IMR-90 (cell line): ENCODE measurements at regions of chr12 and their contacts with region 1.

Region 1: DNA sequence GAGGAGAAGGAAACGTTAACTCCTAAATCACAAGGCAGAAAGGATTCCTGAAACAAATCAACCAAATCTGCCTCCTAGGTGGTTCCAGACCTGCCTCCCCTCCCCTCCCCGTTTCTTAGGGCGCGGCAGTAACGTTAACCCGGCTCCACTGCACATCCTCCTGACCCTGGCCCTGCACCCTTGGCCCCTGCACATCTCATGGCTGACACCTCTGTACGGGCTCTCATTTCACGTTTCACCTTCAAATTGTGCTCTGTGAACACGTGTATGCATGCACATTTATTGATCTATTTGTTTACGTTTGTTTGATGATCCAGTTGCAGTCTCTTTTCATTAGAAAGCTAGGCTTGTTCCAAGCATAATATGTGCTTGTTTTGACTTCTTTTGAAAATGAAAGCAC is 358.1 kb downstream of the ADGRD1 start:
- DNase-seq: no peak
- ATAC-seq: no peak
- H3K4me3 ChIP-seq: no peak overlapping the region
- H3K27ac ChIP-seq: no peak overlapping the region
- H3K4me1 ChIP-seq: no peaks in the 10 kb centered on the region
- H3K27me3 ChIP-seq: no peaks in the 10 kb centered on the region
- CTCF ChIP-seq: no peak
- POLR2A ChIP-seq: no peak
- RAD21 ChIP-seq: no peak

Region 2: DNA sequence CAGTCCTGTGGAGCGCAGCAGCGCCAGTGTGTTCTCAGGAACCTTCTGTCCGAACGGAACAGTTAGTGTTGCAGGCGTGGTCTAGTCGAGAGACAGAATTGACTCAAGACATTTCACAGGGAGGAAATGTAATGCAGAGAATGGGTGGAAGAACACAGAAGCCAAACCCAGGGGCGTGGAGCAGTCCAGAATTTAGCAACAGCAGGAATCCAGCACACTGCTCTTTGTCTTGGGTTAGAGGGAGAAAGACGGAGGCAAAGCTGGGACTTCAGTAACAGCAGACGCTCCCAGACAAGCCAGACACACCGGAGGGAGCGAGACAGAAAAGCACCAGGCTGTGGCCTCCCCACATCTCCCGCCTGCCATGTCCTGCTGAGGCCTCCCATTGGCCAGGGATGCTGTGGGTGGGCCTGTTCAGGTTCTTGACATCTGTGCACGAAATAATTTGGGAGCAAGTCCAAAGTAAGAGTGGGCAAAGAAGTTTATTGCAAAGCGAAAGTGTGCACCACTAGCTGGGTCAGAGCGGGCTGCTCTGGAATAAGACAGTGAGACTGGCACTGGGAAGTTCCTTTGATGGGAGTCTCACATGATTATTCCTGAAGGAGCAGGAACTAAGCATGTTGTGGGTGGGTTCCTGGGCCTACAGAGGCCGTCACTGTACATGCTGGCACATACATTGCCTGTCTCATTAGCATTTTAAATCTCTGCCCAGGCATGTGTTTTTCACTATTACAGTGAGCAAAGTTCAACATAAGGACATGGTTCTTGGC is 59.8 kb after region 1 on chr12:
- CTCF ChIA-PET with region 1: no interaction called
- POLR2A ChIA-PET with region 1: no interaction called
- dilution Hi-C with region 1: no loop called
- in situ Hi-C with region 1: no loop called
- intact Hi-C with region 1: no loop called
- DNase-seq: no peak
- ATAC-seq: no peak
- H3K4me3 ChIP-seq: no peak overlapping the region
- H3K27ac ChIP-seq: no peak overlapping the region
- H3K4me1 ChIP-seq: no peaks in the 10 kb centered on the region
- H3K27me3 ChIP-seq: no peaks in the 10 kb centered on the region
- CTCF ChIP-seq: no peak
- POLR2A ChIP-seq: no peak
- RAD21 ChIP-seq: no peak

Region 3: DNA sequence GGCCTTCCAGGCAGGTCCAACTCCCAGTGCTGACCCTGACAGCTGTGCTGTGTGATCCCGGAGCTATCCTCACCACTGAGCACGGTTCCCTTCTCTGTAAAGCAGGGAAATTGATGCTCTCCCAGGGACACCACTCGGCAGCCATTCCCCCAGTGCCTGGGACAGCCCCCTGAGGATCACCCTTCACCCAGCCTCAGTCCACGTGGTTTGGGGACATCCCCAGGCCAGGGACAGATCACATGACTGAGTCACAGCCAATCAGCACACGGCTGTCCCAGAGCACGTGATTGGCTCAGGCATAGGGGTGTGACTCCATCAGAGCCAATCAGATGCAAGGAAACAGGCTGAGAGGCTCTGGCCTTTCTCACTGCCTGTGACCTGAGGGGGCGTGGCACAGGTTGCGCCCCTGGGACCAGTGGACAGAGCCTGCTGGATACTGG is 330.4 kb after region 1 on chr12:
- CTCF ChIA-PET with region 1: no interaction called
- POLR2A ChIA-PET with region 1: no interaction called
- dilution Hi-C with region 1: no loop called
- in situ Hi-C with region 1: loop called (anchors 5 kb)
- intact Hi-C with region 1: no loop called
- DNase-seq: no peak
- ATAC-seq: no peak
- H3K4me3 ChIP-seq: no peak overlapping the region
- H3K27ac ChIP-seq: no peak overlapping the region
- H3K4me1 ChIP-seq: no peaks in the 10 kb centered on the region
- H3K27me3 ChIP-seq: no peaks in the 10 kb centered on the region
- CTCF ChIP-seq: no peak
- POLR2A ChIP-seq: no peak
- RAD21 ChIP-seq: no peak